Endothelial cell of umbilical vein (primary cell): ENCODE measurements at regions of chr9 and their contacts with region 1.

Region 1: GRCh38 chr9:131334629-131335367 is 45.3 kb downstream of the PLPP7 start:
- DNase-seq: peak; percentile 48
- H3K4me3 ChIP-seq: no peak overlapping the region
- H3K27ac ChIP-seq: no peak overlapping the region
- H3K4me1 ChIP-seq: peaks cover 12% of the 10 kb centered on the region
- H3K27me3 ChIP-seq: no peaks in the 10 kb centered on the region
- CTCF ChIP-seq: no peak
- POLR2A ChIP-seq: no peak

Region 2: DNA sequence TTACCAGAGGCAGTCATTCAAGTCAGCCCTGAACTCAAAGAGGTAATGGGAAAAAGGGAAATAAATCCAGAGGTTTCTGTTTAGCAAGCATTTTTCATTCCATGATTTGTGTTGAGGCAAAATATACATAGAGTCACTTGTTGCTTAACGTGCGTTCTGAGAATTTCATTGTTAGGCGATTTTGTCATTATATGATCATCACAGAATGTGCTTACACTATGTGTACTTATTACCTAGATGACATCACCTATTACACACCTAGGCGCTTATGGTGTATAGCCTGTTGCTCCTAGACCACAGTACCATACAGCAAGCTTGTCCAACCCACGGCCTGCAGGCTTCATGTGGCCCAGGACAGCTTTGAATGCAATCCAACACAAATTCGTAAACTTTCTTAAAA is 173.2 kb before region 1 on chr9:
- CTCF ChIA-PET with region 1: interaction called, 16 read pairs
- POLR2A ChIA-PET with region 1: no interaction called
- dilution Hi-C with region 1: no loop called
- intact Hi-C with region 1: no loop called
- DNase-seq: no peak
- H3K4me3 ChIP-seq: no peak overlapping the region
- H3K27ac ChIP-seq: no peak overlapping the region
- H3K4me1 ChIP-seq: no peaks in the 10 kb centered on the region
- H3K27me3 ChIP-seq: no peaks in the 10 kb centered on the region
- CTCF ChIP-seq: no peak
- POLR2A ChIP-seq: no peak

Region 3: GRCh38 chr9:131197160-131197911 is 137.5 kb before region 1 on chr9:
- CTCF ChIA-PET with region 1: interaction called, 10 read pairs
- POLR2A ChIA-PET with region 1: no interaction called
- dilution Hi-C with region 1: no loop called
- intact Hi-C with region 1: no loop called
- DNase-seq: no peak
- H3K4me3 ChIP-seq: no peak overlapping the region
- H3K27ac ChIP-seq: no peak overlapping the region
- H3K4me1 ChIP-seq: no peaks in the 10 kb centered on the region
- H3K27me3 ChIP-seq: no peaks in the 10 kb centered on the region
- CTCF ChIP-seq: no peak
- POLR2A ChIP-seq: no peak

Region 4: DNA sequence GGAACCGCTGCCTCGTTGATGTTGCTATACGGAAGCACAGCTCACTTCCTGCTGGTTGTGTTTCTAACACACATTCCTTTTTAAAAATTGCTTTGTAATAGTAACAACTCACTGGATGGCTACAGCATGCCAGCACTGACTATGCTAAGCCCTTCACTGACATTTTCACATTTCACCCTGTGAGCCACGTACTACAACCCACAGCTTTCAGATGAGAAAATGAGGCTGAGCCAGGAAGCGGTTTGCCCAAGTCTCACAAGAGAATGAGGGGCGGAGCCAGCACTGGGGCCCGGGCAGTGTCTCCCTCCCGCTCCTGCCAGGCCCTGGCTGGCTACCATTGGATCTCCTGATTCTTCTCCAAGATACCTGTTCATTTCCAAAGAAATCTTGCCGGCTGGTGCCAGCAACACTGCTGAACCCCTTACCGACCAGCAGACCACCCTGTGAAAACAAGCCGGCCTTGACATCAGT is 96.8 kb before region 1 on chr9:
- CTCF ChIA-PET with region 1: interaction called, 8 read pairs
- POLR2A ChIA-PET with region 1: no interaction called
- dilution Hi-C with region 1: no loop called
- intact Hi-C with region 1: loop called (anchors 1 kb)
- DNase-seq: peak; percentile 94
- H3K4me3 ChIP-seq: no peak overlapping the region
- H3K27ac ChIP-seq: peak overlapping the region; percentile 97
- H3K4me1 ChIP-seq: peaks cover 32% of the 10 kb centered on the region
- H3K27me3 ChIP-seq: no peaks in the 10 kb centered on the region
- CTCF ChIP-seq: no peak
- POLR2A ChIP-seq: peak; percentile 72

Region 5: DNA sequence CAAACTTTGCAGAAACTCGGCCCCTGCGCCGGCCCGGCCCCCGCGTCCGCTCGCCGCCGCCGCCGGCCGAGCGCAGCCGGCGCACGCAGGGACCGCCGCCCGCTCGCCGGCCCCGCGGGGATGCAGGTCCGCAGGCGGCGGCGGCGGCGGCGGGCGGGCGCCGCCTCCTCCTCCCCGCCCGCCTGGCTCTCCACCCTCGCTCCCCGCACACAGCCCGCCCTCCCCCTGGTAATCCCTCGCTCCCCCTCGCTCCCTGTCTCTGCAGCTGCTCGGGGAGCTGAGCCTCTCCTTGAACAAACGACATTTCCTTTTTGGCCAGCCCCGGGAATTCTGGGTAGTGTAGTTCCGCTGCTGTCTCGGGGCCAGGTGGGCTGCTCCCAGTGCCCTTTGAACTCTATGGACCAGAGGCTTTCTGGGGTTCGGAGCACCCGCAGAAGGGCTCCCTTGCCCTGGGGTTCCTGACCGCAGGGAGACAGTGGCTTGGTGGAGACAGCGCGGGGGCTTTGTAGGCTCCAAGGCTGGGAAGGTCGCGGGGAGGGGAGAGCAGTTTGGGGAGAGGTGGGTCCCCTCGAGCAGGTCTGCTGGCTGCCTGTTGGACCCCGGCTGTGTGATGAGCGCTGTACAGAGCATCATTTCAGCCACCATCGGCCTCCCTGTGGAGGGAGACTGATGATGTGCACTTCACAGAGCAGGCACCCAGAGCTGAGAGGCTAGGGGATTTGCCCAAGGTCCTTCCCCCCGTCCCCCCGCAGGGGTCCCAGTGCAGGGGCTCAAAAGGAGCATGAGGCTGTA is 56.7 kb before region 1 on chr9:
- CTCF ChIA-PET with region 1: interaction called, 42 read pairs
- POLR2A ChIA-PET with region 1: no interaction called
- dilution Hi-C with region 1: no loop called
- intact Hi-C with region 1: loop called (anchors 1 kb)
- DNase-seq: peak; percentile 86
- H3K4me3 ChIP-seq: peak overlapping the region in 2 of 3 experiments; percentile 31 to 81
- H3K27ac ChIP-seq: no peak overlapping the region
- H3K4me1 ChIP-seq: peaks cover 30% of the 10 kb centered on the region
- H3K27me3 ChIP-seq: peaks cover 14 to 18% of the 10 kb centered on the region in 2 experiments
- CTCF ChIP-seq: no peak
- POLR2A ChIP-seq: no peak